OCI-LY7 (cell line): ENCODE measurements at regions of chr3 and their contacts with region 1.

Region 1: DNA sequence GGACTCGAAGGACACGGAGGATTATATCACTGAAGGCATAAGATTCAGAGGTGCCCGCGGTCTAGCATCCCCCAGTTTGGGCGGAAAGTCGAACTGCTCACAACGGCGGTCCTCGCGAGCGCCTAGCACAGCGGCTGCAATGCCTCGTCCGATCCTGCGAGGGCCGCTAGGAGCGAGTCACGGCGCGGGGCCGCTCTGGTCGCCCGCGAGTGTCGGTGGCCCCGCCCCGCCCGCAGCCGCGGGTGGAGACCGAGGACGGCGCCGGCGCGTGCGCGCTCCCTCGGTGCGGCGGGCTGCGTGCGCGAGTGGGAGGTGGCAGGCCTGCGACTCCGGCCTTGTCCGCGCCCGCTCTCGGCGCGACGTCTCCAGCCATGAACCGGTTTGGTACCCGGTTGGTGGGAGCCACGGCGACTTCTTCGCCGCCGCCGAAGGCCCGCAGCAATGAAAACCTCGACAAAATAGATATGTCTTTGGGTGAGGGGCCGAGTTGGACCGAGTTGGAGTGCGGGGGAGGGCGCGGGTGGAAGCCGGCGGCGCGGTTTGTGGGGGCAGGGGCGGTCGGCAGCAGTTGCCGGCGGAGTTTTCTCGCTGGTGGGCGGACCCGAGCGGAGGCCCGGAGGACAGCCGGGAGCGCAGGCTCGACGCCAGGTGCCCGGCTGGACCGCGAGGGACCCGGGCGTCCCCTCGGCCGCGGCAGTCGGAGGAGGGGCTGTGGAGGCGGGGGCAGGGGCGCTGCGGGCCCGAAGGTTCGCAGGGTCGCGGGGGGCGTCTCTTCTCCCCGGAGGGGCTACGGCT is at the start of gene FYTTD1:
- DNase-seq: peak; percentile 94
- H3K4me3 ChIP-seq: peak within 1 kb of the TSS; percentile 89
- H3K27ac ChIP-seq: peak within 1 kb of the TSS; percentile 76
- H3K4me1 ChIP-seq: peaks cover 41% of the 10 kb centered on the region
- CTCF ChIP-seq: peak; percentile 65
- total RNA-seq, gene FYTTD1: 47.6 and 63.8 TPM in 2 replicates

Region 2: DNA sequence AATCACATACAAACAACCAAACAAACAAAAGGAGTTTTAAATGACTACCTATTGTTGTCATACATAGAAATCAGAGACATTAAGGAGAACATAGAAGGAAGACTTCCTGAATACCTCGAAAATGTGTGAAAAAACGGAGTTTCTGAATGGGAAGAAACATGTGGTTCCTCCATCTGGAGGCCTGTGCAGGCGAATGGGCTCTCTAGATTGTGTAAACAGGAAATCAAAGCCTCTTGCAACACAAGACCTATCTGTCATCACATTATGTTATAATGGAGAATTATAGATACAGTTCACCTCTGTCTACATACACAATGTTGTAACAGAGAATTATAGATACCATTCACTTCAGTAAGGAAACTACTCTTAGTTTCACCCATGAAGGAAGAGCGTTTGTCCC is 57.2 kb before region 1 on chr3:
- CTCF ChIA-PET with region 1: no interaction called
- POLR2A ChIA-PET with region 1: no interaction called
- intact Hi-C with region 1: no loop called
- DNase-seq: no peak
- H3K4me3 ChIP-seq: no peak overlapping the region
- H3K27ac ChIP-seq: no peak overlapping the region
- H3K4me1 ChIP-seq: no peaks in the 10 kb centered on the region
- CTCF ChIP-seq: no peak

Region 3: GRCh38 chr3:197791113-197791891 is 41.5 kb after region 1 on chr3 and contains the start of gene LRCH3:
- CTCF ChIA-PET with region 1: no interaction called
- POLR2A ChIA-PET with region 1: interaction called, 6 read pairs
- intact Hi-C with region 1: loop called (anchors 2 kb)
- DNase-seq: peak; percentile 88
- H3K4me3 ChIP-seq: peak within 1 kb of the TSS; percentile 84
- H3K27ac ChIP-seq: peak within 1 kb of the TSS; percentile 84
- H3K4me1 ChIP-seq: peaks cover 36% of the 10 kb centered on the region
- CTCF ChIP-seq: no peak
- total RNA-seq, gene LRCH3: 39.0 and 44.2 TPM in 2 replicates